GM12878 (cell line): ENCODE measurements at regions of chr2 and their contacts with region 1.

Region 1: DNA sequence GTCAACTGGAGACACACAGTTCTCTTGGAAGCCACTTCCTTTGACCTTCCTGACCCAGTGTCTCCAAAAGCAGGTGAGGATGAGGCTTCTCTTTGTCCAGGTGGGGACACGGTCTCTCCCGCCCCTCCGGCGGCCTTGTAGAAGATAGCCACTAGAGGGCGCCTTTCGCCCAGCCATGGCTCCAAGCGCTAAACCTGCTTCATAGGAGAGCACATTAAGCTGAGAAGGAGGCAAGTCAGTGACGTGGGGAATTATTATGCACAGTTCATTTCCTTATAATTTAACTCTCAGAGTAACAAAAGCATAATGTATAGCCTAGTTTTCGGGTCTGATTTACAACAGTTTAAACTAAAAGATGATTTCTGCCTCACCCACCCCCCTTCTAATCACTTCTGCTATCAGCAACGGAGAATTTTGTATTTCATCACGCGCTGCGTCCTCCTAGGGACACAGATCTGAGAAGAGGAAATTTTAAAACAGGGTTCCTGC is 208.7 kb downstream of the ICOS start:
- DNase-seq: no peak
- ATAC-seq: peak; percentile 100
- H3K4me3 ChIP-seq: no peak overlapping the region
- H3K27ac ChIP-seq: no peak overlapping the region
- H3K4me1 ChIP-seq: no peaks in the 10 kb centered on the region
- H3K27me3 ChIP-seq: peaks cover 0 to 4% of the 10 kb centered on the region in 2 experiments; a peak in 3 of 4 replicates
- CTCF ChIP-seq: peak; percentile 83 to 95 (median 90)
- EP300 ChIP-seq: no peak
- POLR2A ChIP-seq: no peak
- RAD21 ChIP-seq: peak; percentile 83

Region 2: DNA sequence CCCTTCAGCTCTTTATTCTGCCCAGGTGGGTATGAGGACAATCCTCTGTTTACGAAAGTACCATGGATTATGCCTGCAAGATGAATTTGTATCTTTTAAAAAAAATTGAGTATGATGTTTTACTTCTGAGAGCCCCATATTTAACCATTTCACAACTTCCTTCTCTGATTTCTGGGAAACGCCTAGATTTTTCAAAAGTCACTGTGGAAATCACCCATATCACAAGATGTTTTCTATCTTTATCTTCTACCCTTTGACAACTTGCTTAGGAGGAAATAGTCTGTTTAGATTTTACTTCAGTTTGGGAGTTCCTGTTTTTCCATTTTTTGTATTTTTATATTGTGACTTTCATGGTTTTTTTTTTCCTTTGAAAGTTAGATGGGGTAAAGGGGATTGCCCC is 155.8 kb before region 1 on chr2:
- CTCF ChIA-PET with region 1: no interaction called
- POLR2A ChIA-PET with region 1: no interaction called
- RAD21 ChIA-PET with region 1: no interaction called
- SMC1A ChIA-PET with region 1: no interaction called
- in situ Hi-C with region 1: no loop called
- intact Hi-C with region 1: no loop called
- DNase-seq: no peak
- ATAC-seq: no peak
- H3K4me3 ChIP-seq: no peak overlapping the region
- H3K27ac ChIP-seq: no peak overlapping the region
- H3K4me1 ChIP-seq: no peaks in the 10 kb centered on the region
- H3K27me3 ChIP-seq: peaks cover 0 to 4% of the 10 kb centered on the region in 2 experiments; a peak in 1 of 4 replicates
- CTCF ChIP-seq: no peak
- EP300 ChIP-seq: no peak
- POLR2A ChIP-seq: no peak
- RAD21 ChIP-seq: no peak

Region 3: DNA sequence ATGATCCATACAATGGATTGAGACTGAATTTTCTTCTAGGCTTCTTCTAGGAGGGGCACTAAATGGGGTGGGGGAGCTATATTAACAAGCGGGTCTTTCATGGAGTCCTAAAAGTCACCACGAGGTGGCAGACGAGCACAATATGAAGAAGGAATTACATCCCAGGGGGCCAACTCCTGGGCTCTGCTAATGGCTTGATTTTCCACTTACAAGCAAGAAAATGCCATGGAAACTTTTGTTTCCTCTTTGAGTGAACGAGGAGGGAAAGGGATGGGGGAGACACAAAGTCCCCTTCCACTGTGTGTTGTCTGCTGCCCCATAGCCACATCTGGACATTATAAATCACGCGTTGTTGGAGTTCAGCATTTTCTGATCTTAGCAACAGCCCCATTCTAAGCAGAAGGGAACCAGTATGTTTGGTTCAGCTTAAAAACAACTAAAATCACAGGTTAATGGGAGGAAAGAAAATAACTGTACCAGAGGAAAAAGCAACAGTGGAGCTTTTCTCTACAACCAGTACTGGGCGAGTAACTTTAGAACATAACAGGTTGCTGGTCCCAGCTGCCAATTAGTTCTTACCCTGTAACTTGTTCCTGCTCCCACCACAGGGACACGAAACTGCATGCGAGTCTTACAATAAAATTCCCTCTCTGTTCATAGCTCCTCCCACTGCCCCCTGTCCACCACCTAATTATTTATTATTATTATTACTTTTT is 115.0 kb after region 1 on chr2:
- CTCF ChIA-PET with region 1: interaction called, 3 read pairs
- POLR2A ChIA-PET with region 1: no interaction called
- RAD21 ChIA-PET with region 1: no interaction called
- SMC1A ChIA-PET with region 1: no interaction called
- in situ Hi-C with region 1: no loop called
- intact Hi-C with region 1: loop called (anchors 5 kb)
- DNase-seq: no peak
- ATAC-seq: peak; percentile 76
- H3K4me3 ChIP-seq: no peak overlapping the region
- H3K27ac ChIP-seq: no peak overlapping the region
- H3K4me1 ChIP-seq: no peaks in the 10 kb centered on the region
- H3K27me3 ChIP-seq: no peaks in the 10 kb centered on the region
- CTCF ChIP-seq: peak; percentile 51 to 55 (median 54); a peak in 5 of 6 replicates
- EP300 ChIP-seq: no peak
- POLR2A ChIP-seq: no peak
- RAD21 ChIP-seq: 0 out of 2 replicates have a peak, but pooled peaks have one; percentile 30